Right cardiac atrium (tissue), 5 donors: ENCODE measurements at regions of chr5 and their contacts with region 1.

Region 1: DNA sequence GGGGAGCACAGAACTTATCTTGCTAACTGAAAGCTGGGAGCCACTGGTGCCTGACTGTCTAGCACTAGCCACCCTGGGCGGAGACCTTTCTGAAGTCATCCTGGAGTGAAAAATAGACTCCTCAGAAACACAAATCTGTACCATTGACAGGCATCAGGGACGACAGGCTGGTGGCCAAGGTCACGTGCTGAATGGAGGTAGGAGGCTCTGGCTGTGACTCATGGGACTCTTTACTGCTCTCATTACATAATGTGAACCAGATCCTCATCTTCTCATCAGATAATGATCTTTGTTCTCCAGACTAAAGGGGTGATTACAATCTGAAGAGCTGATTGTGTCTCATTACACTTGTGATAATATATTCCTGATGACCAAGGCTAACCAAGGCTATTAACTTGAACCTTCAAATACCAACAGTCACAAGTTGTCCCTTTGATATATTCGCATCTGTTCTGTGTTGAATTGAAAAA is 91.8 kb downstream of the SEMA5A start:
- DNase-seq: no peak
- ATAC-seq: no peak
- H3K4me3 ChIP-seq: no peak overlapping the region
- H3K27ac ChIP-seq: peak overlapping the region; percentile 62
- H3K4me1 ChIP-seq: peaks cover 5% of the 10 kb centered on the region
- H3K27me3 ChIP-seq: no peaks in the 10 kb centered on the region

Region 2: GRCh38 chr5:9498541-9499497 is 44.8 kb after region 1 on chr5:
- intact Hi-C with region 1: loop called in 1 of 4 experiments (anchors 5 kb)
- DNase-seq: no peak
- ATAC-seq: no peak
- H3K4me3 ChIP-seq: no peak overlapping the region
- H3K27ac ChIP-seq: peak overlapping the region; percentile 32
- H3K4me1 ChIP-seq: peaks cover 2% of the 10 kb centered on the region
- H3K27me3 ChIP-seq: no peaks in the 10 kb centered on the region

Region 3: DNA sequence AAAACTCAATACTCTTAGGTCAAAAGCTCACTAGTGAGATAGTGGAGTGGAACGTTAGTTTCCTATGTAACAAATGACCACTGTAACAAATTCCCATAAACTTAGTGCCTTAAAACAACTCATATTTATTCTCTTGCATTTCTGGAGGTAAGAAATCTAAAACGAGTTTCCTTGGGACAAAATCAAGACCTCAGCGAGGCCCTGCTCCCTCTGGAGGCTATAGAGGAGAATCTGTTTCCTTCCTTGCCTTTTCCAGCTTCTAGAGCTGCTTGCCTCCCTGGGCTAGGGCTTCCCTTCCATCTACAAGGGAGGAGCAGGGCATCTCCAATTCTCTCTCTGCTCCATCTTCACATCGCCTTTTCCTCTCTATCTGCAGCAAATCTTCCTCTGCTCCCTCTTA is 59.8 kb after region 1 on chr5:
- intact Hi-C with region 1: no loop called
- DNase-seq: no peak
- ATAC-seq: no peak
- H3K4me3 ChIP-seq: no peak overlapping the region
- H3K27ac ChIP-seq: peak overlapping the region; percentile 81
- H3K4me1 ChIP-seq: peaks cover 1% of the 10 kb centered on the region
- H3K27me3 ChIP-seq: no peaks in the 10 kb centered on the region

Region 4: DNA sequence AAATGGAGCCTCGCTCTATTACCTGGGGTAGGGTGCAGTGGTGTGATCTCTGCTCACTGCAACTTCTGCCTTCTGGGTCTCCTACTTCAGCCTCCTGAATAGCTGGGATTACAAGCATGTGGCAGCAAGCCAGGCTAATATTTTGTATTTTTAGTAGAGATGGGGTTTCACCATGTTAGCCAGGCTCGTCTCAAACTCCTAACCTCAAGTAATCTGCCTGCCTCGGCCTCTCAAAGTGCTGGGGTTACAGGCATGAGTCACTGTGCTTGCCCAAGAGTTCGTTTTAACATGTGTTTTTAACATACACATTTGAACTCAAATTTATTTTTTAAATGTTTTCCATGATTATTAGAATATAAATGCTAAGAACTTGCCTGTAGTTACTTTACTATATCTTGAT is 933.6 kb after region 1 on chr5:
- intact Hi-C with region 1: no loop called
- DNase-seq: no peak
- ATAC-seq: no peak
- H3K4me3 ChIP-seq: no peak overlapping the region
- H3K27ac ChIP-seq: no peak overlapping the region
- H3K4me1 ChIP-seq: no peaks in the 10 kb centered on the region
- H3K27me3 ChIP-seq: no peaks in the 10 kb centered on the region